IMR-90 (cell line): ENCODE measurements at regions of chr1 and their contacts with region 1.

Region 1: GRCh38 chr1:182084487-182085316 is 23.2 kb upstream of the ZNF648 start:
- DNase-seq: peak; percentile 50
- ATAC-seq: peak; percentile 95
- H3K4me3 ChIP-seq: no peak overlapping the region
- H3K27ac ChIP-seq: no peak overlapping the region
- H3K4me1 ChIP-seq: no peaks in the 10 kb centered on the region
- H3K27me3 ChIP-seq: no peaks in the 10 kb centered on the region
- CTCF ChIP-seq: peak; percentile 62
- POLR2A ChIP-seq: no peak
- RAD21 ChIP-seq: peak; percentile 74

Region 2: DNA sequence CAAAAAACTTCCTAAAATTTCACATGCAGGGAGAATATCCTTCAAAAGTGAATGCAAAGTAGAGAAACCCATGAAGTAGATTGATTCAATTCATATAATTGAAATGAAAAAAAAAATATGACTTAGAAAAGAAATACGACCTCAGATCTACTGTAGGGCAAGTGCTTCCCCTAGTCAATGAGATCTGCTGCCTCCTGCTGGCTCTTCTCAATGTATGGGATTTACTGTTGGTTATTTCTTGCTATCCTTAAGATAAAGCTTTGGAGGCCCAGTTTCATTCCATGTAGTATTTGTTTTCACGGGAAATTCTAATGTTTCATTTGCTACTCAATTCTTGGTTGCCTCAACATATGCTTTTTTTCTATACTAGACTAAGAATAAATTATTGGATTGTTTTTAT is 69.3 kb before region 1 on chr1:
- CTCF ChIA-PET with region 1: no interaction called
- POLR2A ChIA-PET with region 1: no interaction called
- dilution Hi-C with region 1: no loop called
- in situ Hi-C with region 1: no loop called
- intact Hi-C with region 1: no loop called
- DNase-seq: no peak
- ATAC-seq: no peak
- H3K4me3 ChIP-seq: no peak overlapping the region
- H3K27ac ChIP-seq: no peak overlapping the region
- H3K4me1 ChIP-seq: no peaks in the 10 kb centered on the region
- H3K27me3 ChIP-seq: no peaks in the 10 kb centered on the region
- CTCF ChIP-seq: no peak
- POLR2A ChIP-seq: no peak
- RAD21 ChIP-seq: no peak

Region 3: DNA sequence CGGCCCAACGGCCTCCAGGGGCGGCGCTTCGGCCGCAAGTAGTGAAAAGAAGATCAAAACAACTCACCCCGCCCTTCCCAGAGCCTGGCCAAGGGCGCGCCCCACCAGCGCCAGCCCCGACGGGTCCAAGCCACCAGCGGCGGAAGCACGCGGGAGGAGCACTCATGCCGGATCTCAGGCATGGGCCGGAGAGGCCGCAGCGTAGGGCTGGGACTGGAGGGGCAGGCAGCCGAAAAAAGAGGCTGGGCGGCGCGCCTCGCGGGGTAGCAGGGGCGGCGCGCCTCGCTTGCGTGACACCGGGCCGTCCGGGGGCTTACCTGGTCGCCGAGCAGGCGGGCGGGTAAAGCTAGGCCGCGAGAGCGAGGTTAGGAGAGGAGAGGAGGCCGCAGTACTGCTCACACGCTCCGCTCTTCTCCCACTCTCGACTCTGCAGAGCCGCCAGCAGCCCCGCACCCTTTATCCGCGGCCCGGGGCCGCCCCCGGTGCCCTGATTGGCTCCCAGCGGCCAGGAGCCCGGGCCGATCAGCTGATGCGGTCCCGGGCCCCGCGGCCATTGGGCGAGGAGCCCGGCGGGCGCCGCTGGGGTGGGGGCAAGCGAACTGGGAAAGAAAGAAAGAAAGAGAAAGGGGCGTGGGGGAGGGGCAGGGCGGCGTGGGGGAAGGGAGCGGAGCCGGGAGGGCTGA is 306.8 kb after region 1 on chr1 and contains the start of gene GLUL:
- CTCF ChIA-PET with region 1: interaction called, 6 read pairs
- POLR2A ChIA-PET with region 1: no interaction called
- dilution Hi-C with region 1: no loop called
- in situ Hi-C with region 1: loop called (anchors 10 kb)
- intact Hi-C with region 1: loop called (anchors 1 kb)
- DNase-seq: peak; percentile 89
- ATAC-seq: peak; percentile 94
- H3K4me3 ChIP-seq: peak within 1 kb of the TSS; percentile 91
- H3K27ac ChIP-seq: peak within 1 kb of the TSS; percentile 88
- H3K4me1 ChIP-seq: peaks cover 3% of the 10 kb centered on the region
- H3K27me3 ChIP-seq: no peaks in the 10 kb centered on the region
- CTCF ChIP-seq: no peak; the same call in 1 of the 2 replicates
- POLR2A ChIP-seq: peak; percentile 98
- RAD21 ChIP-seq: no peak
- total RNA-seq, gene GLUL: 236 and 385 TPM in 2 replicates

Region 4: DNA sequence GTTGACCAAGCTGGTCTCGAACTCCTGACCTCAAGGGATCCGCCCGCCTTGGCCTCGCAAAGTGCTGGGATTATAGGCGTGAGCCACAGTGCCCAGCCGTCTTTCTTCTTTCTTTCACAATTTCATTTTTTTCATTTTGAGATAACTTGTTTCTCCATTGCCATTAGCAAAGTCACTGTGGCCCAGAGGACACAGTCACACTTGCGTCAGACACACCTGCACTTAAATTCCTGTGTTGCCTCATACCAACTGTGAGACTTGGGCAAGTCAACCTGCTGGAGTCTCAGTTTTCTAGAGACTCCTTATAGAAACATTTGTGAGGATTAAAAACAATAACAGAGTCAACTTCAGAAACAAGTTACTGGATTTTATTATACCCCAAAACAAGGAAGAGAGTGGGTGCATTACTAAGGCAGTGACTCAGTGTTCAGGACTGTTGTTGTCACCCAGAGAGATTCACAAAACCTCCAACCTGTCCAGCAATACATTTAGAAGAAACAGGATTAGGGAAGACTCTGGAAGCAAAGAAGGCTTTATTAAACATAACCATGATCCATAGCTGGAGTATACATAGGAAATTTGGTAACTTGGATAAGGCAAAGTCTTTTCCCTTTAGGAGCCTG is 313.2 kb after region 1 on chr1:
- CTCF ChIA-PET with region 1: interaction called, 6 read pairs
- POLR2A ChIA-PET with region 1: no interaction called
- dilution Hi-C with region 1: no loop called
- in situ Hi-C with region 1: loop called (anchors 10 kb)
- intact Hi-C with region 1: loop called (anchors 1 kb)
- DNase-seq: peak; percentile 33
- ATAC-seq: no peak; the same call in 1 of the 2 replicates
- H3K4me3 ChIP-seq: no peak overlapping the region
- H3K27ac ChIP-seq: no peak overlapping the region
- H3K4me1 ChIP-seq: no peaks in the 10 kb centered on the region; the same call in none of the 2 replicates
- H3K27me3 ChIP-seq: no peaks in the 10 kb centered on the region
- CTCF ChIP-seq: no peak
- POLR2A ChIP-seq: no peak
- RAD21 ChIP-seq: no peak

Region 5: GRCh38 chr1:182595641-182596240 is 511.0 kb after region 1 on chr1:
- CTCF ChIA-PET with region 1: no interaction called
- POLR2A ChIA-PET with region 1: no interaction called
- dilution Hi-C with region 1: no loop called
- in situ Hi-C with region 1: no loop called
- intact Hi-C with region 1: loop called (anchors 10 kb)
- DNase-seq: peak; percentile 69
- ATAC-seq: peak; percentile 92
- H3K4me3 ChIP-seq: no peak overlapping the region
- H3K27ac ChIP-seq: no peak overlapping the region
- H3K4me1 ChIP-seq: no peaks in the 10 kb centered on the region; the same call in 1 of the 2 replicates
- H3K27me3 ChIP-seq: peaks cover 12% of the 10 kb centered on the region; the same call in 1 of the 2 replicates
- CTCF ChIP-seq: peak; percentile 84
- POLR2A ChIP-seq: no peak
- RAD21 ChIP-seq: peak; percentile 67

Region 6: DNA sequence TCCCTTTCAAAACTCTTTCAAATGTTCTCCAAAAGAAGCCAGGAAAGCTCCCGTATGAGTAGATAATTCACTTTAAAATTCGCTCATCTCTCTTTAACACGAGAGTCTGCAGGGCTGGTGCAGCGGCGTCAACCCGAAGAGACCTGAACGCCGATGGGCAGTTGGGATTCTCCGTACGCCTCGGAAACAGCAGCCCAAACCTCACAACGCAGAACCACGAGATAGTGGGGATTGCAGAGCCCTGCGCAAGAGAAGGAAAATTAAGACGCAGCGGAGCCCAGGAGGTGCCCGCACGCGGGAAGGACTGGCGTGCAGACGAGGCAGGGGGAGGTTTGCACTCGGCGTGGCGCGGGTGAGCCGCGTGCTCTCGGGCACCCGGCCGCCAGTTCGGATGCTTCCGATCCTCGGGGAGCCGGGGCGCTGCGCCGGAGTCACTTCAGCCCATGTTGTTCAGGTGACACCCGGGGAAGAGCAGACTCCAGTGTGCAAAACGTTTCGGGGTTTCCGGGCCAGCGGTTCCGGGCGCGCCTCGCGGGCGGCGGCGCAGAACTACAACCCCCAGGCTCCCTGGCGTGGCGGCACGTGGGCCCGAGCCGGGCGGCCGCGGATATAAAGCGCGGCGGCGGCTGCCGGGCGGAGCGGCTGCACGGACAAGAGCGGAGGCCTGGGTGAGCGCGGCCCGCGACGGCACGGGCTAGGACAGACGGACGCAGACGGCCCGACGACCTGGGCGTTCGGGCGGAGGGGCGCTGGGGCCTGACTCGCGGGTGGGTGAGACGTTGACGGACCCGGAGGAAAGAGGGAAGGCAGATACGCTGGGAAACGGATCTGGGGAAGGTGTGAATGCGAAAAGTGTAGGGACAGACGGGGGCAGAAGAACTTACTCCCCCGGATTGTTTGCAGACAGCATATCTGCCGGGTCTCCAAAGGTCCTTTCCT is 704.7 kb after region 1 on chr1 and contains the start of gene NPL:
- CTCF ChIA-PET with region 1: no interaction called
- POLR2A ChIA-PET with region 1: no interaction called
- dilution Hi-C with region 1: no loop called
- in situ Hi-C with region 1: loop called (anchors 25 kb)
- intact Hi-C with region 1: loop called (anchors 5 kb)
- DNase-seq: peak; percentile 50
- ATAC-seq: peak; percentile 96
- H3K4me3 ChIP-seq: peak within 1 kb of the TSS; percentile 79
- H3K27ac ChIP-seq: no peak within 1 kb of the TSS
- H3K4me1 ChIP-seq: no peaks in the 10 kb centered on the region
- H3K27me3 ChIP-seq: peaks cover 35% of the 10 kb centered on the region
- CTCF ChIP-seq: no peak
- POLR2A ChIP-seq: 0 out of 2 replicates have a peak, but pooled peaks have one; percentile 37
- RAD21 ChIP-seq: no peak
- total RNA-seq, gene NPL: 0.36 and 0.83 TPM in 2 replicates